Activated CD8-positive, alpha-beta memory T cell treated with anti-CD3 and anti-CD28 coated beads, Interleukin-2, amount 10 ng/mL, durations not matched to agents 7 days and 5 days (primary cell): ENCODE measurements at regions of chr6 and their contacts with region 1.

Region 1: DNA sequence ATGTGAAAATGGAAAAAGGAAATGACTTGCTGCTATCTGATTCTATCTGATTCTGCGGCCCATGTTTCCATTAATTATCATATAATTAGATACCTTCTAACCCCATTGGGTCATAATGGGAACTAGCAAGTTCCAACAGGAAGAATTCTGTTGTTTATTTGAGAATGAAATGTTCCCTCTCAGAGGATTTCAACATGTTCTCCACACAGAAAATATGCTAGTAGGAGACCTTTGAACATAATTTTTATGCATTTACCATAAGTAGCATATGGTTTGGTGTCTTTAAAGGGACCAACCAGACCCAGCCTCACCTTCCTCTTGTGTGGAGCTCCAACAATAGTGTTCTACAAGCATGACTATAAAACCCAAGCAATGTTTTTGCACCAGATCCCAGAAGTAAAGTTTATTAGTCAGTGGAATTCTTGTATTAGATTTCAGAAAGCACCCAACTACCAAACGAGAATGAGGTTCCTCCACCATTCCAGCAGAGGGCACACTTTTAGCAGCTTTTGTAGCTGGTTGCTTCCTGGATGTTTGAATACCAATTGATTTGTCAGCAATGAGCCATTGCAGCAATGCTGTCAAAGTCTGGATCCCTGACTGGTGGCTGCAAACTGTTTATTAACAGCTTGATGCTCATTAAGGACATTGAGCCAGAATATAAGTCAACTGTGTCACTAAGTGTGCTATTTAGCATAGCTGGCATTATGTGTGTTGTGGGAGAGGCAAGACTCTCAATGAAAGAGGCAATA is 143.6 kb upstream of the GJE1 start:
- DNase-seq: peak; percentile 53
- ATAC-seq: no peak
- H3K4me3 Mint-ChIP-seq: no peak overlapping the region
- H3K27ac Mint-ChIP-seq: no peak overlapping the region
- H3K4me1 Mint-ChIP-seq: no peaks in the 10 kb centered on the region
- H3K27me3 Mint-ChIP-seq: no peaks in the 10 kb centered on the region

Region 2: DNA sequence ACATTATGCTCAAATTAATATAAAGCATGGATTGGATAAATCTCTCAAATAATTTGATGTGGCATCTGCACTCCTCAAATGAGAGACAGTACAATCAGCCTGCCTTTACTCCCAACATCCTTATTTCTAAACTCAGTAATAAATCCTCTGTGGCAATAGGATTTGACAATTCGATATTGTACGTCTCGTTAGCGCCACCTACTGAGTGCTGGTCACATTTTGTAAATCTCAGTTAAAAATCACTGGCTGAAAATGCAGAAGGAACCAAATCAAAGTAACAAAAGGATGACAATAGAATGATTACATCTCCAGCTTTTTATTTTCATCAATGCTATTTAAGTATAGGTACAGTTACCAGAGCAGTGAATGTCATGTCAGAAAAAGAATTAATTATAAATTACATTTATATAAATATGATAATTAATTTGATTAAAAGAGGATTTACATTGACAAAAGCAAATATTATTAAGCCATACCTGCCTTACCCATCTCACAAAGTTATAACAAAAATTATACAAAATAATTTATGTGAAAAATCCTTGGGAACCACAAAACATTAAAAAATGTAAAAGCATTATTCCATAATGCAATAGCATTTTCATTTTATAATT is 123.4 kb after region 1 on chr6:
- CTCF ChIA-PET with region 1: interaction called, 12 read pairs
- DNase-seq: peak; percentile 78
- ATAC-seq: no peak
- H3K4me3 Mint-ChIP-seq: no peak overlapping the region
- H3K27ac Mint-ChIP-seq: no peak overlapping the region
- H3K4me1 Mint-ChIP-seq: no peaks in the 10 kb centered on the region
- H3K27me3 Mint-ChIP-seq: peaks cover 3% of the 10 kb centered on the region